ENCODE measurements at regions of chr17 and their contacts with region 1.

Region 1: GRCh38 chr17:12020642-12021622 is at the start of gene MAP2K4:
- DNase-seq: peak; percentile 93
- H3K4me3 Mint-ChIP-seq: peak within 1 kb of the TSS; percentile 73
- H3K27ac Mint-ChIP-seq: peak within 1 kb of the TSS; percentile 44
- H3K4me1 Mint-ChIP-seq: peaks cover 27% of the 10 kb centered on the region
- H3K27me3 Mint-ChIP-seq: peaks cover 8% of the 10 kb centered on the region
- total RNA-seq, gene MAP2K4: 30.2 to 30.3 TPM

Region 2: GRCh38 chr17:12053552-12053951 is 32.6 kb after region 1 on chr17:
- CTCF ChIA-PET with region 1: no interaction called
- POLR2A ChIA-PET with region 1: interaction called, 29 read pairs
- DNase-seq: no peak
- H3K4me3 Mint-ChIP-seq: peak overlapping the region; percentile 64
- H3K27ac Mint-ChIP-seq: peak overlapping the region; percentile 77
- H3K4me1 Mint-ChIP-seq: peaks cover 57% of the 10 kb centered on the region
- H3K27me3 Mint-ChIP-seq: no peaks in the 10 kb centered on the region

Measured in activated CD4-positive, alpha-beta memory T cell treated with anti-CD3 and anti-CD28 coated beads, Interleukin-2, amount 10 ng/mL, durations not matched to agents 7 days and 5 days (primary cell).